ENCODE measurements at regions of chrX and their contacts with region 1.

Region 1: DNA sequence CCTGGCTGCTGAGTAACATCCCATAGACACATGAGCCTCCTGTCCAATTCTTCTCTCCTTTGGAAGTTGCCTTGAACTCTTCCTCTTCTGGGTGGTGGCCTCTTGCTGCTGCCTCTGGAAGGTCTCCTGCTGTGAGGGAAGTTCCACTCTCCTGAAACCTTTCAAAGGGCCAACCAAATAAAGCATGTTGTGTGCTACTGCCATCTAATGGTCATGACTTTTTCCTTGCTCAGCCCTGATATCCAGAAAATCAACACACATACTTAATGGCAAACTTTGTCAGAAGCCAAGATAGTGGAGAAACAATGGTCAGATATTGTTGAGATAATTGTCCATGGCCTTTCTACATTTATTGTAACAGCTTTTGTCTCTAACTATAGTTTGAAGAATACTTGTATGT is 19.1 kb upstream of the ZXDA start:
- DNase-seq: no peak
- H3K4me3 ChIP-seq: no peak overlapping the region
- CTCF ChIP-seq: no peak
- POLR2A ChIP-seq: no peak

Region 2: GRCh38 chrX:57821703-57822375 is 107.5 kb before region 1 on chrX:
- intact Hi-C with region 1: loop called (anchors 10 kb)
- DNase-seq: peak in 1 of 2 donors; percentile 30
- H3K4me3 ChIP-seq: no peak overlapping the region
- CTCF ChIP-seq: no peak
- POLR2A ChIP-seq: no peak